ENCODE measurements at regions of chr5 and their contacts with region 1.

Region 1: GRCh38 chr5:174327317-174328236 is 282.1 kb downstream of the NSG2 start:
- DNase-seq: peak; percentile 88 to 89
- H3K4me3 ChIP-seq: no peak overlapping the region
- H3K4me3 Mint-ChIP-seq: no peak overlapping the region
- H3K27ac Mint-ChIP-seq: no peak overlapping the region
- H3K4me1 ChIP-seq: peaks cover 12% of the 10 kb centered on the region
- H3K4me1 Mint-ChIP-seq: peaks cover 21% of the 10 kb centered on the region
- H3K27me3 ChIP-seq: no peaks in the 10 kb centered on the region
- H3K27me3 Mint-ChIP-seq: peaks cover 8% of the 10 kb centered on the region
- CTCF ChIP-seq: peak; percentile 92 to 96

Region 2: GRCh38 chr5:173573126-173573960 is 754.2 kb before region 1 on chr5:
- CTCF ChIA-PET with region 1: no interaction called
- POLR2A ChIA-PET with region 1: no interaction called
- intact Hi-C with region 1: no loop called
- DNase-seq: peak; percentile 70 to 85
- H3K4me3 ChIP-seq: peak overlapping the region; percentile 17; the same call in 1 of the 2 replicates
- H3K4me3 Mint-ChIP-seq: peak overlapping the region; percentile 44
- H3K27ac Mint-ChIP-seq: peak overlapping the region; percentile 51
- H3K4me1 ChIP-seq: peaks cover 3% of the 10 kb centered on the region; the same call in 1 of the 2 replicates
- H3K4me1 Mint-ChIP-seq: peaks cover 11% of the 10 kb centered on the region
- H3K27me3 ChIP-seq: no peaks in the 10 kb centered on the region
- H3K27me3 Mint-ChIP-seq: no peaks in the 10 kb centered on the region
- CTCF ChIP-seq: peak; percentile 91 to 97

Region 3: GRCh38 chr5:174084691-174085154 is 242.9 kb before region 1 on chr5:
- CTCF ChIA-PET with region 1: no interaction called
- POLR2A ChIA-PET with region 1: no interaction called
- intact Hi-C with region 1: no loop called
- DNase-seq: no peak
- H3K4me3 ChIP-seq: no peak overlapping the region
- H3K4me3 Mint-ChIP-seq: no peak overlapping the region
- H3K27ac Mint-ChIP-seq: no peak overlapping the region
- H3K4me1 ChIP-seq: no peaks in the 10 kb centered on the region
- H3K4me1 Mint-ChIP-seq: no peaks in the 10 kb centered on the region
- H3K27me3 ChIP-seq: no peaks in the 10 kb centered on the region
- H3K27me3 Mint-ChIP-seq: peaks cover 32% of the 10 kb centered on the region
- CTCF ChIP-seq: no peak

Region 4: DNA sequence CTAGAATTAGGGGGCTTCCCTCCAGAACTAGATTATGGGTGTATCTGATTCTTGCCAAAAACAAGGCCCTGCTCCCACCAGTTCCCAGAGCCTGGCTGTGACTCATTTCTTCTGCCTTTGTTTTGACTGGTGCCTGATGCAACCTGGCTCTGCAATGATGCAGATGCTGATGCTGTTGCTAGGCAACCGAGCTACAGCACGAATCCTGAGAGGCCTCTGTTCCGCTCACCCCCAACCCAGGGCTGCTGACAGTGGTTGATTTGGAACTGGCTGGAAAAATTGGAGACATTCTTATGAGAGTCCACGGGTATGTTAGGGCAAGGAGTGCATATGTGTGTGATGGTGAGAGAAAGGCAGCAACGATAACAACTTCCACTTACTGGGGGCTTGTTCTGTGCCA is 181.8 kb before region 1 on chr5:
- CTCF ChIA-PET with region 1: no interaction called
- POLR2A ChIA-PET with region 1: no interaction called
- intact Hi-C with region 1: no loop called
- DNase-seq: no peak
- H3K4me3 ChIP-seq: no peak overlapping the region
- H3K4me3 Mint-ChIP-seq: no peak overlapping the region
- H3K27ac Mint-ChIP-seq: no peak overlapping the region
- H3K4me1 ChIP-seq: peaks cover 5% of the 10 kb centered on the region; the same call in 1 of the 2 replicates
- H3K4me1 Mint-ChIP-seq: no peaks in the 10 kb centered on the region
- H3K27me3 ChIP-seq: no peaks in the 10 kb centered on the region
- H3K27me3 Mint-ChIP-seq: peaks cover 15% of the 10 kb centered on the region
- CTCF ChIP-seq: no peak

Region 5: DNA sequence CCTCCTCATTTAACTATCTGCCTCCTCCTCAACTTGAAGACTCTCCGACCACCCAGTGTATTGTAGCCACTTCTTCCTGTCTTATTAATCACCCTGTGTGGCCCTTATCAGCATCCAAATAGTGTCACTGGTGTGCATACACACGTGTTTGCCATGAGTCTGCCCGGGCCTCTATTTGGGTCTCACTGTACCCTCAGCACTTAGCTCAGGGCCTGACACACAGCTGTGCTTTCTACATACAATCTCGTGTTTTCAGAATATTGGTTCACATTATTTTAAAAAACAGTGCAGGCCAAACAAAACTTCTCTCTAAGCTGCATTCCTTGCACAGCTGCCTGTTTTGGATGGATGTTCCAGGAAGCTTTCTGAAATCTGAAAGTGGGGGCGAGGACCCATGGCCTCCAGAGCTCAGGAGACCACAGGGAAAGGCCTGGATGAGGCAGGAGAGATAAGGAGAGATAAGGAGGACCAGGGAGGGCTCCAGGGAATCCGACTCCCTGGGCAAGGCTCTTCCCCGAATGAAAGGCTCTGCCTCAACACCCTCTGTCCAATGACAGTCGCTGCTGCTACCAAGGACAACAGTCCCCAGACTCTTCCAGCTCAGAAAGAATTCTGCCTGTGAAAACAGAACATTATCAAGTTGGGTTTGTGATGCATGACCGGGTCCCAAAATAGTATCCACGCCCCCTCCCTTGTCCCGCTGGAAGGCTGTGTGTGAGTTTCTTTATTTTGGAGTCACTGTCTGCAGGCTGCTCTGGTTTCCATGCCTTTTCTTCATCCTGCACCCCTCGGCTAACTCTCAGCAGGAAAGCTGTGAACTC is 26.4 kb before region 1 on chr5:
- CTCF ChIA-PET with region 1: no interaction called
- POLR2A ChIA-PET with region 1: no interaction called
- intact Hi-C with region 1: no loop called
- DNase-seq: no peak
- H3K4me3 ChIP-seq: no peak overlapping the region
- H3K4me3 Mint-ChIP-seq: no peak overlapping the region
- H3K27ac Mint-ChIP-seq: no peak overlapping the region
- H3K4me1 ChIP-seq: no peaks in the 10 kb centered on the region
- H3K4me1 Mint-ChIP-seq: no peaks in the 10 kb centered on the region
- H3K27me3 ChIP-seq: no peaks in the 10 kb centered on the region
- H3K27me3 Mint-ChIP-seq: peaks cover 36% of the 10 kb centered on the region
- CTCF ChIP-seq: no peak

Region 6: DNA sequence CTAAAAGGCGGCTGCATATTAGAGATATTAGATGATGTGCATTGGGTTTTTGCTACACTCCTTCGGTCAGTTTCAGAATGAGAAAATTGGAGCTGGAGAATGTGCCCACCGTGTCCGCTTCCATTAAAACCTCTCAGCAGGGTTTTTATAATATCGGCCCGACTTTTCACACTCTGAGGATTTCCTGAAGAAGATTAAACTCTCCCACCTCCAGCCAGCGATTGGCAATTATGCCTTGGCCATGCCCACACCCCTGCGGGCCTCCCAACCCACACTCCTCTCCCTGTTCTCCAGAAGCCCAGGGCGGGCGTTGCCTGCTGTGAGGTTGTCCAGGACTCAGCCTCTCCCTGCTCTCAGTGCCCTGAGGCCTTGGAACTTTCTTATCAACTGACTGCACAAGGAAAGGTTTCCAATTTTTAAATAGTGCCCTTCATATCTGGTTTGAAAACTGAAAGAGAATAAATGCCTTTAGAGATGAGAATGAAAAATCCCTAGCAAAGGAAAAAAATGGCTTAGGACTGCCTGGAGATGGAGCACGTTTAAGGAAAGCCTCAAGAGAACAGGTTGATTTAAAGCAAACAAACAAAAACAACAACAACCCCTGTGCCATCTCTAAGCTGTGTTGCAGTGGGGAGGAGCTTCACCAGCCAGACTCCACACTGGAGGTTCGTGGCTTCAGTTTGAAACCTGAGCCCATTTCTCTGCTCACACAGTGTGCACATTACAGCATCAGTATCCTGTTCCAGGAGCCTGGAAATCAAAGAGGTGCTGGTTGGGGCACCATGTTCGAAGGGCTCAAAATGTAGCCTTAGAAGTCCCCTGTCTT is 10.8 kb after region 1 on chr5:
- CTCF ChIA-PET with region 1: interaction called, 3 read pairs
- POLR2A ChIA-PET with region 1: no interaction called
- intact Hi-C with region 1: loop called (anchors 1 kb)
- DNase-seq: peak; percentile 26 to 75
- H3K4me3 ChIP-seq: no peak overlapping the region
- H3K4me3 Mint-ChIP-seq: peak overlapping the region; percentile 58
- H3K27ac Mint-ChIP-seq: peak overlapping the region; percentile 82
- H3K4me1 ChIP-seq: peaks cover 25% of the 10 kb centered on the region
- H3K4me1 Mint-ChIP-seq: peaks cover 38% of the 10 kb centered on the region
- H3K27me3 ChIP-seq: no peaks in the 10 kb centered on the region
- H3K27me3 Mint-ChIP-seq: no peaks in the 10 kb centered on the region
- CTCF ChIP-seq: no peak

Region 7: GRCh38 chr5:174409070-174409469 is 81.5 kb after region 1 on chr5:
- CTCF ChIA-PET with region 1: interaction called, 6 read pairs
- POLR2A ChIA-PET with region 1: no interaction called
- intact Hi-C with region 1: loop called (anchors 2 kb)
- DNase-seq: peak in 1 of 2 experiments; percentile 29
- H3K4me3 ChIP-seq: no peak overlapping the region
- H3K4me3 Mint-ChIP-seq: no peak overlapping the region
- H3K27ac Mint-ChIP-seq: no peak overlapping the region
- H3K4me1 ChIP-seq: peaks cover 5% of the 10 kb centered on the region; the same call in 1 of the 2 replicates
- H3K4me1 Mint-ChIP-seq: peaks cover 8% of the 10 kb centered on the region
- H3K27me3 ChIP-seq: no peaks in the 10 kb centered on the region; the same call in 1 of the 2 replicates
- H3K27me3 Mint-ChIP-seq: peaks cover 13% of the 10 kb centered on the region
- CTCF ChIP-seq: peak in 1 of 2 experiments; percentile 22

Region 8: DNA sequence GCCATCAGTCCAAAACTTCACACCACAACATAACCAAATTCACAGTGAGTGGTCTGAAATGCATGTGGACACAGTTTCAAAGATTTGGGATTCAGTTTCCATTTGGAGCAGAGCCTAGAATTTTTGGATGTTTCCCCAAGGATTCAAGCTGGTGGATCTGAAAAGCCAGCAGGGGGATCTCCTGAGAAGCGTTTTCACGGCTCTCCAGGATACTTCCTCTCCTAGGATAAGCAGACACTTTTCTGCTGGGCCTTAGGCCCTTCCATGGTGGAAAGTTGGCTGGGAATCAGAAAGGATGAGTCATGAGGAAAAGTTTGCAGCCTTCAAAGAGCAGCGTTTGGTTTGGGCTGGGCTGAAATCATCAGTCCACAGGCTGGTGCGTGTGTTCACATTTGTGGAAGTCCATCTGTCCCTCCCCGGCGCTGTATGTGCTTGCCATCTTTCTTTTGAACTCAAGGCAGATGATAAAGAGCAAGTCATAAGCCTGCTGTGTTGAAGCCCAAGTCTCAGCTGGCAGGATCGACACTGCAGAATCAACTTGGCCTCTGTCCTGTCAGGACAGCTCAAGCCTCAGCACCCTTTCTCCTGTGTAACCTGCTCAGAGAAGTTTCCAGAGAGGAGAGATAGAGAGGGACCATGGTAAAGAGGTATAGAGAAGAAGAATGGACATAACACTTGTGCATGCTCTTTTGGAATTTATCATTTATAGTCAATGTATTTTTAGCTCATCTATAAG is 244.3 kb after region 1 on chr5:
- CTCF ChIA-PET with region 1: no interaction called
- POLR2A ChIA-PET with region 1: no interaction called
- intact Hi-C with region 1: loop called (anchors 10 kb)
- DNase-seq: peak; percentile 24 to 42
- H3K4me3 ChIP-seq: no peak overlapping the region
- H3K4me3 Mint-ChIP-seq: no peak overlapping the region
- H3K27ac Mint-ChIP-seq: no peak overlapping the region
- H3K4me1 ChIP-seq: no peaks in the 10 kb centered on the region
- H3K4me1 Mint-ChIP-seq: no peaks in the 10 kb centered on the region
- H3K27me3 ChIP-seq: no peaks in the 10 kb centered on the region
- H3K27me3 Mint-ChIP-seq: no peaks in the 10 kb centered on the region
- CTCF ChIP-seq: peak in 1 of 2 experiments; percentile 35

Region 9: DNA sequence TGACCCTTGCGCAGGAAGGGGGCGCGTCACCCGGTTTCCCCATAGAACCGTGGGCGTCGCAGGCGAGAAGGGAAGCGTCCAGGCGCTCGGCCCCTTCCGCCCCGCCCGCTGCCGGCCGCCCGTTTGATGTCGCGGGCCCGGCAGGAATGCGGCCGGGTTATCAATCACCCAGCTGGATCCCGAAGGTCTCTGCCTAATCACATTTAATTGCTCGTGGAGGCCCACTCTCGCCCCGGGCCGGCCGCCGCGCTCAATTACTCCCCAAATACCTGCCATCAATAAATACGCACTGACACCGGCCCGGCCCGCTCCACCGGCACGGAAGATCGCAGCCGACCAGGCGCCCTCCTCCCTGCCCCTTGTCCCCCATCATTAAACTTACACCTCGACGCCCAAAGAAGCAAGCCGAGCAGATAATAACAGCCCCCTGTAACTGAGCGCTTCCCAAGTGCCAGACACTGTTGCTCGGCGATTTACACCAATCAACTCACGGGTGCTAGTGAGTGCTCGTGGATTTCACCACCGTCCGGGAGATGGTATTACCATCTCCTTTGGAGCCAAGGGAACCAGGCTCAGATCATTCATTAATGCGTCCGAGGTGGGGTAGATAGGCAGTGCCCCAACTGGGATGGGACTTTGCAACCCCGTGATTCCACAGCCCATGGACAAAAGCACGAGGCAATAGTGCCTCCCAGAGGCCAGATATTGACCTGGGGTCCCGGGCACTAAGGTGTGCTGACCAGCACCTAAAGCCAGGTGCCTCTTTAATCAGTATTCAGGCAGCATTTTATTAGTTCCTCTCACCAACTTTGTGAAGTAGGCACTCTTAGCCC is 408.1 kb after region 1 on chr5:
- CTCF ChIA-PET with region 1: no interaction called
- POLR2A ChIA-PET with region 1: no interaction called
- intact Hi-C with region 1: loop called (anchors 1 kb)
- DNase-seq: peak; percentile 87 to 90
- H3K4me3 ChIP-seq: peak overlapping the region; percentile 50
- H3K4me3 Mint-ChIP-seq: peak overlapping the region; percentile 86
- H3K27ac Mint-ChIP-seq: peak overlapping the region; percentile 52
- H3K4me1 ChIP-seq: peaks cover 36% of the 10 kb centered on the region
- H3K4me1 Mint-ChIP-seq: peaks cover 24% of the 10 kb centered on the region
- H3K27me3 ChIP-seq: no peaks in the 10 kb centered on the region
- H3K27me3 Mint-ChIP-seq: no peaks in the 10 kb centered on the region
- CTCF ChIP-seq: peak; percentile 74 to 90

Region 10: DNA sequence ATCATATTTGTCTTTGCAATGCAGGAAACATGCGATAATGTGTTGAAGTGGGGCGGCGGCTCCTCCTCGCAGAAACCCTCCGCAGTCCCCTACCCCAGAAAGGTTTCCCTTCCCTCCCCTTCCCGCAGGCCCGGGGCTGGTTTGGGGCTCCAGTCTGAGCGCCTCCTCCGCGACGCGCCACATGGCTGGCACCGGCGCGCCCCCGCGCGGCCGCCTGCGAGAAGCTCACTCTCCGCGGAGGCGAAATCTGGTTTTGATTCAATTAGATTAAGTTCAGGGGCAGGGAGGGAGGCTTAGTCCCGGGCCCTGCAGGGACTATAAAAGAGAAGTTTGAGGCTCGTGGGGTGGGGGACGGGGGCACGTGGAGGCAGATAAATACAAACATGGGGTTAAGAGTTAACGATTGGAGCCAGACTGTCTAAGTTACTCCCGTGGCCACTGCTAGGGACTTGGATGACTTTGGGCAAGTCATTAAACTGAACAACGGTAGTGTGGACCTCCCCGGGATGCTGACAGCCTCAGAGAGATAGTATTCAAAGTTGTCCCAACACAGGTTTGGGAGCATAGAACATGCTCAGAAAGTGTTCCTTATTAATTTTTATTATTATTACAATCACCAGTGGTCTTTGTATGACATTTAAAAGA is 466.2 kb after region 1 on chr5:
- CTCF ChIA-PET with region 1: interaction called, 4 read pairs
- POLR2A ChIA-PET with region 1: no interaction called
- intact Hi-C with region 1: loop called (anchors 1 kb)
- DNase-seq: peak; percentile 61 to 81
- H3K4me3 ChIP-seq: no peak overlapping the region
- H3K4me3 Mint-ChIP-seq: peak overlapping the region; percentile 13
- H3K27ac Mint-ChIP-seq: no peak overlapping the region
- H3K4me1 ChIP-seq: no peaks in the 10 kb centered on the region
- H3K4me1 Mint-ChIP-seq: peaks cover 7% of the 10 kb centered on the region
- H3K27me3 ChIP-seq: no peaks in the 10 kb centered on the region
- H3K27me3 Mint-ChIP-seq: no peaks in the 10 kb centered on the region
- CTCF ChIP-seq: peak; percentile 97 to 98